AG04450 (cell line): ENCODE measurements at regions of chr2 and their contacts with region 1.

Region 1: GRCh38 chr2:239283288-239283945 is 117.4 kb downstream of the HDAC4 start:
- DNase-seq: no peak
- H3K4me3 ChIP-seq: no peak overlapping the region
- H3K27ac ChIP-seq: no peak overlapping the region
- H3K27me3 ChIP-seq: no peaks in the 10 kb centered on the region
- CTCF ChIP-seq: no peak

Region 2: DNA sequence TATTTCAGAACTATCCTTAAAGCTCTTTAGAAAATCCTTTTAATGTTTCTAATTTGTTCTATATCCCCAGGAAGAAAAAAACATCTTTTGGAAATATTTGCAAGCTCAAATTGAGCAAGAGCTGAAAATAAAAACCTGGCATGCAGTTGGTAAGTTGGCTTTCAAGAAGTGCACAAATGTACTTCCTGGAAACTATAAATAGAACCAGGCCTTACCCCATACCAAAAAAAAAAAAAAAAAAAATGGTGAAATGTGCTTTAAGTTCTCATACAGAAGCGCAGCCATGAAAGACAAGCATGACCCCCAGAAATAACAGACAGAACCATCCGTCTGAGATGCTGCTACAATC is 61.1 kb before region 1 on chr2:
- CTCF ChIA-PET with region 1: no interaction called
- POLR2A ChIA-PET with region 1: interaction called, 12 read pairs
- DNase-seq: no peak
- H3K4me3 ChIP-seq: peak overlapping the region; percentile 46
- H3K27ac ChIP-seq: peak overlapping the region; percentile 90
- H3K27me3 ChIP-seq: no peaks in the 10 kb centered on the region
- CTCF ChIP-seq: no peak